ENCODE measurements at regions of chr14 and their contacts with region 1.

Region 1: DNA sequence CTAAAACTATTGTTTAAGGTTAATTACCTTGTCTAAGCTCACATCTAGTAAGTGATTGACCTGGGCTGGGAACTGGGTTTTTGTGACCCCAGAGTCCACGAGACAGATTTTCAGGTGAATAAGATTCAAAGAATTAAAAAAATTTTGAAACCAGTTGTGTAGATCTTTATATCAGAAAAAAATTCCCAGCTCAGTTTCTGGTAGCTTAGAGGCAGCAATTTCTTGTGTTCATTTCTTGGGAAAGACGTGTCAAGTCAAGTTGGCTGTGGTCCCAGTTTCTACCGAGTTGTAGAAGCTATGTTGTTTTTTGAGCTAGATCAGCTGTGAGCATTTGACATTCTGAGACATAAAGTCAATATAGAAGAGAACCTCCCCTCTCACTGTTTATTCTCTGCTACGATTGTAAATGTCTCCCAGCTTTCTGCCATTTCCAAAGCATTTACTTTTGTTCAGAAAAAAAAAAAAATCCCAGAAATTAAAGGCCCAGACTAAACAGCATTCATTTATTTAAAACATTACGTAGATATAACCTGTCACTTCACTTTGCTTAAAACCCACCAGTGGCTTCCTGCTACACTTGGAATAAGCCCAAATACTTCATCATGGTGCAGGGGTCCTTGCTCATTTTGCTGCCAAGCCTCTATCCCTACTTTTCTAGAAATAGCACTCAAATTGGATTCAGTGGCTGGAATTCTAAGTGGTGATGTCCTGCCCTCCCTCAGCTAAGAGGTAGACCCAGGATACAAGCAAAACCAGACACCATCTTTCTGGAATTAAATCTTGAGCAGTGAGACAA is 20.5 kb upstream of the PYGL start:
- DNase-seq: no peak
- ATAC-seq: no peak
- H3K4me3 ChIP-seq: no peak overlapping the region
- H3K4me3 Mint-ChIP-seq: no peak overlapping the region
- H3K27ac ChIP-seq: no peak overlapping the region
- H3K27ac Mint-ChIP-seq: no peak overlapping the region
- H3K4me1 ChIP-seq: no peaks in the 10 kb centered on the region
- H3K4me1 Mint-ChIP-seq: no peaks in the 10 kb centered on the region
- H3K27me3 ChIP-seq: no peaks in the 10 kb centered on the region
- H3K27me3 Mint-ChIP-seq: peaks cover 6% of the 10 kb centered on the region
- CTCF ChIP-seq: no peak

Region 2: GRCh38 chr14:50835280-50835679 is 129.5 kb before region 1 on chr14:
- CTCF ChIA-PET with region 1: no interaction called
- POLR2A ChIA-PET with region 1: no interaction called
- intact Hi-C with region 1: no loop called
- DNase-seq: peak in 5 of 14 experiments; percentile 23 to 73 (median 69)
- ATAC-seq: peak; percentile 30
- H3K4me3 ChIP-seq: no peak overlapping the region
- H3K4me3 Mint-ChIP-seq: peak overlapping the region; percentile 59
- H3K27ac ChIP-seq: no peak overlapping the region
- H3K27ac Mint-ChIP-seq: peak overlapping the region; percentile 72
- H3K4me1 ChIP-seq: peaks cover 24% of the 10 kb centered on the region
- H3K4me1 Mint-ChIP-seq: peaks cover 48% of the 10 kb centered on the region
- H3K27me3 ChIP-seq: no peaks in the 10 kb centered on the region
- H3K27me3 Mint-ChIP-seq: no peaks in the 10 kb centered on the region
- CTCF ChIP-seq: no peak

Region 3: DNA sequence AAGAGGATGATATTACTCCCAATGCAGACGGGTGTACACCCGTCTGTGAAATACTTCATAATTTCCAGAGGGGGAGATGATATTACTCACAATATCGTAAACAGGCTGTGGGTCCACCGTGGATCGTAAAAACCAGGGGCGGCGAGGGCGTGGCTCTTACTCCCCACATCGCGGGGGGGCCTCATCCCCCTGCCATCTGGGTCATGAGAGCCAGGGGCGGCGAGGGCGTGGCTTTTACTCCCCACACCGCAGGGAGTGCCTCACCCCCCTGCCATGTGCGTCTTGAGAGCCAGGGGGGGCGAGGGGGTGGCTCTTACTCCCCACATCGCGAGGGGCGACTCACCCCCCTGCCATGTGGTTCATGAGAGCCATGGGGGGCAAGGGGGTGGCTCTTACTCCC is 809.4 kb after region 1 on chr14:
- CTCF ChIA-PET with region 1: no interaction called
- POLR2A ChIA-PET with region 1: no interaction called
- intact Hi-C with region 1: loop called in 1 of 2 experiments (anchors 5 kb)
- DNase-seq: peak in 1 of 14 experiments; percentile 6
- ATAC-seq: peak; percentile 29
- H3K4me3 ChIP-seq: no peak overlapping the region
- H3K4me3 Mint-ChIP-seq: no peak overlapping the region
- H3K27ac ChIP-seq: no peak overlapping the region
- H3K27ac Mint-ChIP-seq: no peak overlapping the region
- H3K4me1 ChIP-seq: peaks cover 5% of the 10 kb centered on the region
- H3K4me1 Mint-ChIP-seq: peaks cover 4% of the 10 kb centered on the region
- H3K27me3 ChIP-seq: no peaks in the 10 kb centered on the region
- H3K27me3 Mint-ChIP-seq: peaks cover 3% of the 10 kb centered on the region
- CTCF ChIP-seq: no peak

Measured in CD4-positive, alpha-beta T cell (primary cell).